ENCODE measurements at regions of chr17 and their contacts with region 1.

Region 1: DNA sequence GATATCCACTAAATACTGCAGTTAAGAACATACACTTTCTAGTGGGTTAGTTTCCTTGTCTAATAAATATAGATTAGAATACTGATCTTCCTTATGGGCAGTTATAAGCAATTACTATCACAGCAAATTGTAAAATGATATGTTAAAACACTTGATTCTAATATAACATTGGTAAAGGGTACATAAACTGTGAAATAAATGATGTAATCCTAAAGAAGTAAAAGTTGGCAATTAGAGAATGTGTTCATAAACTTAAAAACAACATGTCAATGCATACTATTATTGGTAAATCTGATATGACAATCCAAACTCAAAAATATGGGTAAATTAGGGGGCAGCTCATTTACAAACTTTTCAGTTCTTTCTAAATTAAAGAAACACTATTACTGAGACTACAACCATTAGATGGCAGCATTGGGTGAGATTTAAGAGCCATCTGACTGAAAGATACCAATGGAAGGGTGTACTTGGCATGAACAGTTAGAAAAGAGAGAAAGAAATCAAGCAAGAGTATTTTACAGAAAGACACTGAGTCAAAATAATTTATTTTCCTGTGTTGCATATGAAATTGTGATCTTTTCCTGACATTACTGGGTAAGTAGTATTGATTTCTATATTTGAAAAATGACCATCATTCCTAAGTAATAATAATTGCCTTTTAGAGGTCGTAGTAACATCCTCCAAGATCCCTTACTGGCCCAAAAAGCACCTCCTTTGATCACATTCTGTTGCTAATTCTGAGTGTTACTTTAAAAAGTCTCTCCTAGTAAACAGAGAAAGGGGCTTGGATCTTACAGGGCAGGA is 119.6 kb downstream of the SPAG9 start:
- DNase-seq: peak; percentile 80
- ATAC-seq: peak; percentile 67
- H3K4me3 ChIP-seq: no peak overlapping the region
- H3K4me3 Mint-ChIP-seq: no peak overlapping the region
- H3K27ac ChIP-seq: no peak overlapping the region
- H3K27ac Mint-ChIP-seq: no peak overlapping the region
- H3K4me1 ChIP-seq: no peaks in the 10 kb centered on the region
- H3K4me1 Mint-ChIP-seq: no peaks in the 10 kb centered on the region
- H3K27me3 ChIP-seq: no peaks in the 10 kb centered on the region
- H3K27me3 Mint-ChIP-seq: no peaks in the 10 kb centered on the region
- CTCF ChIP-seq: peak; percentile 86

Region 2: GRCh38 chr17:50731575-50732460 is 269.2 kb before region 1 on chr17:
- CTCF ChIA-PET with region 1: no interaction called
- POLR2A ChIA-PET with region 1: no interaction called
- intact Hi-C with region 1: no loop called
- DNase-seq: no peak
- ATAC-seq: no peak
- H3K4me3 ChIP-seq: no peak overlapping the region
- H3K4me3 Mint-ChIP-seq: no peak overlapping the region
- H3K27ac ChIP-seq: peak overlapping the region in 1 of 2 donors; percentile 3
- H3K27ac Mint-ChIP-seq: no peak overlapping the region
- H3K4me1 ChIP-seq: peaks cover 10 to 14% of the 10 kb centered on the region in 2 donors
- H3K4me1 Mint-ChIP-seq: peaks cover 51% of the 10 kb centered on the region
- H3K27me3 ChIP-seq: no peaks in the 10 kb centered on the region
- H3K27me3 Mint-ChIP-seq: no peaks in the 10 kb centered on the region
- CTCF ChIP-seq: no peak

Region 3: DNA sequence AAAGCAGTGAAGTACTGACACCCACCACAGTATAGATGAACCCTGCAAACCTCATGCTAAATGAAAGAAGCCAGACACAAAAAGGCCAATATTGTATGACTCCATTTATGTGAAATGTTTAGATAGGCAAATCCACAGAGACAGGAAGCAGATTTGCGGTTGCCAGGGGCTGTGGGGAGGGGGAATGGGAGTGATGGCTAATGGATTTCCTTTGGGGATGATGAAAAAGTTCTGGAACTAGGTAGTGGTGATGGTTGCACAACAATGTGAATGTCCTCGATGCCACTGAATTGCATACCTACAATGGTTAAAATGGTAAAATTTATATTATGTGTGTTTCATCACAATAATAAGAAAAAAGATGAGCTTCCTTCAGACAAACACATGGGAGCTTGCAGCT is 194.0 kb before region 1 on chr17:
- CTCF ChIA-PET with region 1: no interaction called
- POLR2A ChIA-PET with region 1: no interaction called
- intact Hi-C with region 1: no loop called
- DNase-seq: no peak
- ATAC-seq: no peak
- H3K4me3 ChIP-seq: no peak overlapping the region
- H3K4me3 Mint-ChIP-seq: no peak overlapping the region
- H3K27ac ChIP-seq: no peak overlapping the region
- H3K27ac Mint-ChIP-seq: no peak overlapping the region
- H3K4me1 ChIP-seq: no peaks in the 10 kb centered on the region
- H3K4me1 Mint-ChIP-seq: no peaks in the 10 kb centered on the region
- H3K27me3 ChIP-seq: no peaks in the 10 kb centered on the region
- H3K27me3 Mint-ChIP-seq: peaks cover 3% of the 10 kb centered on the region
- CTCF ChIP-seq: no peak

Region 4: GRCh38 chr17:50853015-50853615 is 147.9 kb before region 1 on chr17:
- CTCF ChIA-PET with region 1: interaction called, 18 read pairs
- POLR2A ChIA-PET with region 1: no interaction called
- intact Hi-C with region 1: no loop called
- DNase-seq: no peak
- ATAC-seq: no peak
- H3K4me3 ChIP-seq: no peak overlapping the region
- H3K4me3 Mint-ChIP-seq: peak overlapping the region; percentile 65
- H3K27ac ChIP-seq: no peak overlapping the region
- H3K27ac Mint-ChIP-seq: peak overlapping the region; percentile 86
- H3K4me1 ChIP-seq: peaks cover 9 to 11% of the 10 kb centered on the region in 2 donors
- H3K4me1 Mint-ChIP-seq: peaks cover 13% of the 10 kb centered on the region
- H3K27me3 ChIP-seq: no peaks in the 10 kb centered on the region
- H3K27me3 Mint-ChIP-seq: no peaks in the 10 kb centered on the region
- CTCF ChIP-seq: no peak

Region 5: DNA sequence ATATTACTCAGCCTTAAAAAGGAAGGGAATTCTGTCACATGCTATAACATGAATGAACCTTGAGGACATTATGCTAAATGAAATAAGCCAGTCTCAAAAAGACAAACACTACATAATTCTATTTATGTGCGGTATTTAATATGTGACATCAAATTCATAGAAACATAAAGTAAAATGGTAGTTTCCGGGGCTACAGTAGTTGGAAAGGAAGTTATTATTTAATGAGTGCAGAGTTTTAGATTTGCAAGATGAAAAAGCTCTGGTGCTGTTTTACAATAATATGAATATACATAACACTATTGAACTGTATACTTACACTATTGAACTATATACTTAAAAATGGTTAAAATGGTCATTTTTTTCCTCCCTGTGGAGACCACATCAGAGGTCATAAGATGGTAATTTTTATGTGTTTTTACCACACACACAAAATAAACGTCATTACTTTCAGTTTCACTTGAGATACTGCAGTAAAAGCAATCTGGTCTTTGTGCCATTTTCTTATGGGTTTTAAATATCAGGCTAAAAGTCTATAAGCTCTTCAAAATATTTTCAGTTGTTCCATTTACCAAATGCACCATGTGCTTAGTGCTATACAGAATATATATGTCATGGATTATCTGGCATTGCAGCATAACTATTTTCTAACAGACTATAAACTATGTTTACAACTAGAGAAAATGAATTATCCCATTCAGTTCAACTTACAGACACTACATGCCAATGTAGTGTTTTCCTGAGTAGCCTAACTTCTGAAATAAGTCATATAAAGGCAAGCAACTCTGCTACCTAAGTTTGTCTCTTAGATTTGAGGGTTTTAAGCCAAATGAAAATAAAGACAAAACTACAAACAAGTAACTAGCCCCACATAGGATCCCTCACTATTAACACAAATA is 28.8 kb after region 1 on chr17:
- CTCF ChIA-PET with region 1: interaction called, 17 read pairs
- POLR2A ChIA-PET with region 1: no interaction called
- intact Hi-C with region 1: no loop called
- DNase-seq: peak; percentile 49
- ATAC-seq: peak; percentile 39
- H3K4me3 ChIP-seq: peak overlapping the region in 2 of 5 experiments; percentile 1 to 32
- H3K4me3 Mint-ChIP-seq: peak overlapping the region; percentile 63
- H3K27ac ChIP-seq: peak overlapping the region; percentile 15 to 22
- H3K27ac Mint-ChIP-seq: peak overlapping the region; percentile 56
- H3K4me1 ChIP-seq: peaks cover 7 to 21% of the 10 kb centered on the region in 2 donors
- H3K4me1 Mint-ChIP-seq: peaks cover 27% of the 10 kb centered on the region
- H3K27me3 ChIP-seq: no peaks in the 10 kb centered on the region
- H3K27me3 Mint-ChIP-seq: no peaks in the 10 kb centered on the region
- CTCF ChIP-seq: no peak

Region 6: DNA sequence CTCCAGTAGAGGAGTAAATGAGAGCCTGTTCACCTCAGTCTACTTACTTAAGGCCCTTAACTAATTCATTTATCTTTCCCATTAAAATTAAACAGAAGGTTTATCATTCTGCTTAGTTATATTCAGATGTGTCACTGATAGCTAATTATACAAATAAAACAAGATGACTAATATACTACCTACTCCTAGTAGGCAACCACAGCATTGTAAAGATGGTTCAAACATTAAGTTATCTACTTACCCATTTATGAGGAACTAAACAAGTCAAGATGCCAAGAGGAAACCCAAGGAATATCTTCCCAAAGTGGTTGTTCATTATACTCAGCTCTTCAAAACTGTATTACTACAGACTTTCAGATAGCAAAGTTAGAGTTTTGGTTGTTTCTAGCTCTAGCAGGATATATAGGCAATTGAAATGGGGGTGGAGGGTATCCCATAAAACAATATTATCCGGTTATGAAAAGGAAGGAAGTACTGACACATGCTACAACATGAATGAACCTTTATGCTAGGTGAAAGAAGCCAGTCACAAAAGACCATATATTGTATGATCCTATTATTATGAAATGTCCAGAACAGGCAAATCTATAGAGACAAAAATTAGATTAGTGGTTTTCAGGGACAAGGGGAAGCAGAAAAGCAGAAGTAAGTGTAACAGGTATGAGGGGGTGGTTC is 63.2 kb after region 1 on chr17:
- CTCF ChIA-PET with region 1: interaction called, 46 read pairs
- POLR2A ChIA-PET with region 1: no interaction called
- intact Hi-C with region 1: no loop called
- DNase-seq: no peak
- ATAC-seq: no peak
- H3K4me3 ChIP-seq: no peak overlapping the region
- H3K4me3 Mint-ChIP-seq: no peak overlapping the region
- H3K27ac ChIP-seq: no peak overlapping the region
- H3K27ac Mint-ChIP-seq: no peak overlapping the region
- H3K4me1 ChIP-seq: peaks cover 5% of the 10 kb centered on the region in 2 donors
- H3K4me1 Mint-ChIP-seq: peaks cover 12% of the 10 kb centered on the region
- H3K27me3 ChIP-seq: no peaks in the 10 kb centered on the region
- H3K27me3 Mint-ChIP-seq: no peaks in the 10 kb centered on the region
- CTCF ChIP-seq: no peak

Region 7: DNA sequence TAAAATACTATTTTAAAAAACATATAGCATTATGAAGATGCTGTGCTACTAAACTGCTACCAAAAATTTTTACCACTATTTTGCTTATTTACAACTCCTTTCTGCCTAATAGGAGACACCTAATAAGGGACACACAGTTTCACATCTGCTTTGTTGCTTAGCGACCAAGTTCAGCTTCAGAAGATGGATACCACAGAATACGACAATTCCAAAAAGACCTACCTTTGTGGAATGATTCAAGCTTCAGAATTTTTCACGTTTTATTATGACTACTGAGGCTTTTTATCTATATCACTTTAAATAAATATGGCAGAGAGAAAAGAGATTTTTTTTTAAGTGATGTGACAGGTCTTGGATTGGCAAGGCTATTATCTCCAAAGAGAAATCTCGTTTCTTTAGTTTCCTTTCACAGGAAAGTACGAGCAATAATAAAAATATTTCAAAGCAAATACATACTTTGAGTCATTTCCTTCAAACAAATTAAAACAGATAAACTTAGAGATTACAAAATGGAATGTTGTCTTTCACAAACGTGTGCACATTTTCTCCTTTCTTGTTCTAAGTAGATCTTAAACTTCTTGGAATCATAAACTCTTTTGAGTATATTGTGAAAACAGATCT is 84.3 kb after region 1 on chr17:
- CTCF ChIA-PET with region 1: no interaction called
- POLR2A ChIA-PET with region 1: no interaction called
- intact Hi-C with region 1: no loop called
- DNase-seq: no peak
- ATAC-seq: no peak
- H3K4me3 ChIP-seq: no peak overlapping the region
- H3K4me3 Mint-ChIP-seq: no peak overlapping the region
- H3K27ac ChIP-seq: no peak overlapping the region
- H3K27ac Mint-ChIP-seq: no peak overlapping the region
- H3K4me1 ChIP-seq: peaks cover 3% of the 10 kb centered on the region in 2 donors
- H3K4me1 Mint-ChIP-seq: peaks cover 27% of the 10 kb centered on the region
- H3K27me3 ChIP-seq: no peaks in the 10 kb centered on the region
- H3K27me3 Mint-ChIP-seq: no peaks in the 10 kb centered on the region
- CTCF ChIP-seq: no peak

Region 8: DNA sequence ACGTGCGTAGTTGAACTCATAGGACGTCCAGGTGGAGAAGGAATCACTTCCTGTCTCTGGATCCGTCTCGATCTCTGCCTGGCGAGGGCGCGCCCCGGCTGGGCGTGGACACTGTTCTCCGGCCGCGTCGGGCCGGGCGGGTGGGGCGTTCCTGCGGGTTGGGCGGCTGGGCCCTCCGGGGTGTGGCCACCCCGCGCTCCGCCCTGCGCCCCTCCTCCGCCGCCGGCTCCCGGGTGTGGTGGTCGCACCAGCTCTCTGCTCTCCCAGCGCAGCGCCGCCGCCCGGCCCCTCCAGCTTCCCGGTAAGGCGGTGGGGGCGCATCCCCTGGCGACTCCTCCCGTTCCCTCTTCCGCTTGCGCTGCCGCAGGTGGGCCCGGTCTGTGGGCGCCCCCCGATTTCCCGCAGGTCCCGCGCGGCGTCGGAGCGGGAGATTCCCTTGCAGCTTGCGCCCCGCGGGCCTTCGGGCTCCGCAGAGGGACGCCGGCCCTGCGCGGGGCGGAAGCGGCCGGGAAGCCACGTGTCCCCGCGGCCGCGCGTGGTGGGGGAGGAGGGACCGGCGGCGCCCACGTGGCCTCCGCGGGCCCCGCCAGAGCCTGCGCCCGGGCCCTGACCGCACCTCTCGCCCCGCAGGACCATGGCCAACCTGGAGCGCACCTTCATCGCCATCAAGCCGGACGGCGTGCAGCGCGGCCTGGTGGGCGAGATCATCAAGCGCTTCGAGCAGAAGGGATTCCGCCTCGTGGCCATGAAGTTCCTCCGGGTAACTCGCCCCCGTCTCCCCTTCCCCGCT is 165.4 kb after region 1 on chr17 and contains the start of gene NME2:
- CTCF ChIA-PET with region 1: interaction called, 12 read pairs
- POLR2A ChIA-PET with region 1: interaction called, 3 read pairs
- intact Hi-C with region 1: loop called (anchors 1 kb)
- DNase-seq: peak; percentile 83
- ATAC-seq: peak; percentile 87
- H3K4me3 ChIP-seq: peak within 1 kb of the TSS; percentile 57 to 83 (median 74)
- H3K4me3 Mint-ChIP-seq: peak within 1 kb of the TSS; percentile 97
- H3K27ac ChIP-seq: peak within 1 kb of the TSS; percentile 56 to 77
- H3K27ac Mint-ChIP-seq: peak within 1 kb of the TSS; percentile 99
- H3K4me1 ChIP-seq: peaks cover 9 to 22% of the 10 kb centered on the region in 2 donors
- H3K4me1 Mint-ChIP-seq: peaks cover 16% of the 10 kb centered on the region
- H3K27me3 ChIP-seq: no peaks in the 10 kb centered on the region
- H3K27me3 Mint-ChIP-seq: no peaks in the 10 kb centered on the region
- CTCF ChIP-seq: no peak
- total RNA-seq, gene NME2: 154 and 169 TPM in 2 replicates